Activated naive CD4-positive, alpha-beta T cell treated with anti-CD3 and anti-CD28 coated beads for 36 hours (primary cell): ENCODE measurements at regions of chr15 and their contacts with region 1.

Region 1: GRCh38 chr15:95894367-95894962 is 436.0 kb upstream of the NR2F2 start:
- DNase-seq: no peak
- H3K4me3 Mint-ChIP-seq: no peak overlapping the region
- H3K27ac Mint-ChIP-seq: no peak overlapping the region
- H3K4me1 Mint-ChIP-seq: no peaks in the 10 kb centered on the region
- H3K27me3 Mint-ChIP-seq: no peaks in the 10 kb centered on the region

Region 2: DNA sequence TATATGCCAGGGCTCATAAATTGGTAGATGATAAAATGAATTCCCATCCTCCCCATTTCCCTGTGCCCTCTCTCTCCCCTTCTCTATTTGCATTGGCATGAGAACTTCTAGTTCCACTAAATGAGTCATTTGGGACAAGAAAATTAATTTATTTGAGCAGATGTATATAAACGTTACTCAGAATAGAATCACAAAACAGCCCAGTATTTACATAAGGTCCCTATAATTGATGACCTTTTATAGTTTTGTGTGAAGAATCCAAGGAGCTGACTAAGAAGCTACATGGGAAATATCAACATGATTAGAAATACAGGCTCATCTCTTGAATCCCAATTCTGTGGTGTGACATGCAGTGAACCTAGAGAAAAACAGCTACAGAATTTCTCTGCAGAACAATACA is 181.7 kb before region 1 on chr15:
- CTCF ChIA-PET with region 1: no interaction called
- intact Hi-C with region 1: no loop called
- DNase-seq: no peak
- H3K4me3 Mint-ChIP-seq: no peak overlapping the region
- H3K27ac Mint-ChIP-seq: no peak overlapping the region
- H3K4me1 Mint-ChIP-seq: peaks cover 3% of the 10 kb centered on the region
- H3K27me3 Mint-ChIP-seq: no peaks in the 10 kb centered on the region

Region 3: DNA sequence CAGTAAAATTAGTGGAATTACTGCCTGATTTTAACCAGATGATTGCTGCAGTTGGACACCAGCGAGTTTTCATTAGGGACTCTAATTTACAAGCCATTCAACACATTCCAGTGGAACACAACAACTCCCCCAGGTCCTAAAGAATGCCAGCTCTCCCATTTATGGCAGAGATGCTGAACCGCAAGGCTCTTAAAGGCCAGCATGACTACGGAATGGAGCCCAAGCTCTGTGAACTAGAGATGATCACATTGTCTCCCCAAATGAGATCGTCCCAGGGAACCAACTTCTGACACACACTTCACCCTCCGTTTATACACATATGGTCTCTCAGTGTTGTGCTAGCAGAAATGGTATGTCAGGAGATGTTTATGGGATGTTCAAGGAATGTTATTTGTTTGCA is 10.2 kb before region 1 on chr15:
- CTCF ChIA-PET with region 1: no interaction called
- intact Hi-C with region 1: no loop called
- DNase-seq: no peak
- H3K4me3 Mint-ChIP-seq: no peak overlapping the region
- H3K27ac Mint-ChIP-seq: no peak overlapping the region
- H3K4me1 Mint-ChIP-seq: peaks cover 9% of the 10 kb centered on the region
- H3K27me3 Mint-ChIP-seq: no peaks in the 10 kb centered on the region

Region 4: DNA sequence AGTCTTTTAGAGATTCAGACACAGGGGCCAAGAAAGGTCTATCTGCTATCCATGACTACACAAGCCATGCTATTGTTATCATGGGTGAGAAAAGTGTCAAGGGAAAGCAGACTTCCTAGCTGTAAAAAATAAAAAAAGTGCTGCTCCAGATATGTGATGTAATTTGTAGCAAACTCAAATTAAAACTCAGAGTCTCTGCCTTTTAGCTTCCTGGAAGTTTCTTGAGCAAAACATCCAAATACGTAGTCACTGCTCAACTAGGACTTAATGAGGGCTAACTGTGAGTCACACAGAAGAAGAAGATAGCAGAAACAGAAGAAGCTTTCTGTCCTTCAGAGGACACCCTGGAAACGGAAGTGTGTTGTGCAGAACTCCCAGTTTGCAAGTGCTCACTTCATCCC is 42.7 kb after region 1 on chr15:
- CTCF ChIA-PET with region 1: no interaction called
- intact Hi-C with region 1: loop called (anchors 1 kb)
- DNase-seq: no peak
- H3K4me3 Mint-ChIP-seq: no peak overlapping the region
- H3K27ac Mint-ChIP-seq: no peak overlapping the region
- H3K4me1 Mint-ChIP-seq: no peaks in the 10 kb centered on the region
- H3K27me3 Mint-ChIP-seq: no peaks in the 10 kb centered on the region